ENCODE measurements at regions of chr3 and their contacts with region 1.

Region 1: GRCh38 chr3:156151824-156152428 is 31.5 kb downstream of the KCNAB1 start:
- DNase-seq: peak; percentile 63 to 83
- H3K4me3 ChIP-seq: no peak overlapping the region
- H3K27ac ChIP-seq: no peak overlapping the region
- H3K4me1 ChIP-seq: no peaks in the 10 kb centered on the region
- H3K27me3 ChIP-seq: no peaks in the 10 kb centered on the region
- CTCF ChIP-seq: peak; percentile 90 to 93 (median 91)
- EP300 ChIP-seq: no peak
- POLR2A ChIP-seq: no peak
- RAD21 ChIP-seq: peak; percentile 95 to 97

Region 2: DNA sequence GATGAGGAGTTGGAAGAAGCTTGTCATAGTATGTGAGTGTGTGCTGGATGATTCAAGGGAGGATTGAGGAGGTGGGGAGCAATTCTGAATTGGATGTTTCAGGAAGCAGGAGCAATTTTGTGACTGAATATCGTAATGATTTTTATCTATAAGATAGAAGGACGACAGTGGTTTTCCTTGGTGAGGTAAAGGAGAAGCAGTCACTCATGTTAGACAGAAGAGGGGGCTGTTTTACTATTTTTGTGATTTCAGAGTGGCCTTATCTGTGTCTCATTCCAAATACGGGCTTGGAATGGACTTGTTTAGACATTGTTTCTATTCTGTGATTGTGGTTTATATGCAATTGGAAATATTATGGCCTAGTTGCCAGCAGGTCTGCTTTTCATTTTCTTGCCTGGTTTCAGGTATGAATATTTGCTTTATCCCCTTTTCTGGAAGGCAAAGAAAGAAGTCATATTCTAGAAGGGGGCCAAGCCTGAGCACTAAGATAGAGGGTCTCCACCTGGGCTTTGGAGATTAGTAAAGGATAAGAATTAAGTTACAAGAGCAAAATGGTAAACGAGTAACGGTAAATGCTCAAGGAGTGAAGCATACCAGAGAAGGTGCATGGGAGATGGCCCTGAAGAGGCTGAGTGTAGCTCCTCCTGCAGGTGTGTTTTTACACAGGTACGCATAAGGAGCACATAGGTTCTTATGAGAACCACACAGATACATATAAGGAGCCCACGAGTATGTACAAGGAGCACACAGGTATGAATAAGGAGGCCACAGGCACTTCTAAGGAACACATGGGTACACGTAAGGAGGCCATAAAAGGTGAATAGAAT is 156.2 kb before region 1 on chr3:
- CTCF ChIA-PET with region 1: interaction called, 11 read pairs
- POLR2A ChIA-PET with region 1: no interaction called
- DNase-seq: no peak
- H3K4me3 ChIP-seq: no peak overlapping the region
- H3K27ac ChIP-seq: no peak overlapping the region
- H3K4me1 ChIP-seq: no peaks in the 10 kb centered on the region
- H3K27me3 ChIP-seq: no peaks in the 10 kb centered on the region
- CTCF ChIP-seq: peak; percentile 25 to 65 (median 59)
- EP300 ChIP-seq: no peak
- POLR2A ChIP-seq: no peak
- RAD21 ChIP-seq: peak; percentile 80 to 81

Region 3: DNA sequence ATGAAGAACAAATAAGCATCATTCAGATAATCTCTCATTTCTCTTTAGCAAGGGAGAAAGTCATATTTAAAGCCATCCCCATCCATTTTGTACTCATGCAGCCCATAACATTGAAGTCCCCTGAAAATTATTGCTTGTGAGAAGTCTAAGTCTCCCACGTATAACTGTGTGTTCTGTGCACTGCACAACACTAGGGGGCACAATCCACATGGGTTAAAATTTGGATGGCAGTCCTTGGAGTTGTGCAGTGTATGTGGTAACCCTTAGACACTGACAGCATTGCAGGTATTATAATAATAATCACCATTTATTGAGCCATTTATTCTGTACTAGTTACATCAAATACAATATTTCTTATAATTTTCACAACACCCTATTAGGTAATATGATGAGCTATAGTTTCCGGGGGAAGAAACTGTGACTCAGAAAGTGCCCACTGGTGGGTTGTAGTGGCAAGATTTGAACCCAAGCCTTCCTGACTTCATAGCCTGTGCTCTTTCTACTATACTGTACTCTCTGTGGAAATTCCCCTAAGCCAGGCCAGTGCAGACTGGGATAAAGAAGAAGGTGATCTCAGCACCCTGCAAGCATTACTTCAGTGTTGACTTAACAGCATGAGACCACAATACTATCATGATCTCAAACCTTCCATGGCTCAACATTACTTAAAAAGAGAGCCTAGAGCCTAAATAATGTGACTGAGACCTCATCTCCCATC is 15.8 kb before region 1 on chr3:
- CTCF ChIA-PET with region 1: interaction called, 53 read pairs
- POLR2A ChIA-PET with region 1: no interaction called
- DNase-seq: no peak
- H3K4me3 ChIP-seq: no peak overlapping the region
- H3K27ac ChIP-seq: no peak overlapping the region
- H3K4me1 ChIP-seq: no peaks in the 10 kb centered on the region
- H3K27me3 ChIP-seq: no peaks in the 10 kb centered on the region
- CTCF ChIP-seq: peak; percentile 3 to 64 (median 52)
- EP300 ChIP-seq: no peak
- POLR2A ChIP-seq: no peak
- RAD21 ChIP-seq: peak; percentile 57 to 69

Region 4: DNA sequence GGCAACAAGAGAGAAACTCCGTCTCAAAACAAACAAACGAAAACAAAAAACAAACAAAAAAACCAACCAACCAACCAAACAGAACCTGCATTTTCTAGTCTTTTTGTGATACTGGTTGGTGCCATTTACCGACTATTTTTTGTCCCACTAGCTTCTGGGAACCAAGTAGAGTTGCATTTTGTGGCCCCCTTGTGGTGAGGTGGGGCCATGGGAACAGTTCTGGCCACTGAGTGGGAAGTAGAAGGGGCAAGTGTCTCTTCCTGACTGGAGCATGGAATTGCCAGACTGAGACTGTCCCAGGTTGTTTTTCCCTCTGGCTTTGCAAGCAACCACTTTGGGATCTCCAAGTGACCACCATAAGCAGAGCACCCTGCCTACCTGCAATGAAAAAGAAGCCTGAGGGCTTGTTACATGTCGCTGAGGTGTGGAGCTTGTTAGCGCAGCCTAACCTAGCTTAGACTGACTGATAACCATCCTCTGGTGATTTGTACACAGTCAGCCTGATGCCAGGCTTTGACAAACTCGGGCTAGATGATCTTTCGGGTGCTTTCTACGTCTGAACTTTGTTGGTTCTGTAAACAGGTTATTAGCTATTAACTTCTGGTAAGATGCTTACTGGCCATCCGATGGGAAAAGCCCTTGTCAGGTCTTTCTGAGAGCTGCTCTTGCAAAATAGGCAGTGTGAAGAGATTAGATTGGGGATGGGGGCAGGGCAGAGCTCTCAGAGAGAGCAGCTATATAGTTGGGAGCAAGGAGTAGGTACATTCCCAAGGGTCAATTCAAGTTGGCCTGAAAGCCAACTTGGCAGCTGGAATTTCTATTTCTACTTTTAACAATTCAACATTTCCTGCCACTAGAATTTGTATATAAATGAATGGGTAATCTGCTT is 230.8 kb after region 1 on chr3:
- CTCF ChIA-PET with region 1: interaction called, 138 read pairs
- POLR2A ChIA-PET with region 1: no interaction called
- DNase-seq: peak in 1 of 2 experiments; percentile 80
- H3K4me3 ChIP-seq: no peak overlapping the region
- H3K27ac ChIP-seq: no peak overlapping the region
- H3K4me1 ChIP-seq: no peaks in the 10 kb centered on the region
- H3K27me3 ChIP-seq: no peaks in the 10 kb centered on the region
- CTCF ChIP-seq: peak; percentile 80 to 86 (median 86)
- EP300 ChIP-seq: no peak
- POLR2A ChIP-seq: no peak
- RAD21 ChIP-seq: peak; percentile 83 to 90

Region 5: DNA sequence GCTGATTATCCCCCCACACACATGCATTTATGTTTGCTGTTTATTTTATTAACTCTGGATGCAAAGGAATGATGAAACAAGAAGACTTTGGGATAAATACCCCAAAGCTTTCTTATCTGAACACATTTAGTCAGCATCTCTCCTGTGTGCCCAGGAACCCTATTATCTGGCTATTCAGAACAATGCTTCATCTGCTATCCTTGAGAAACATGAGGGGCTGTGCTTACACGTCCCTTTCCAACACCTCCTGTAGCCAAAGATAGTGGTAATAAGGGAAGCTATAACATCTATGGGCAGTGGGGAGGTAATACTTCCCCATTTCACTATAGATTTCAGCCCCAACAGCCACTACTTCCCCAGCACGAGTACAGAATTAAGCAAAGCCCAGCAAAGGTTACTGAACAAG is 308.3 kb after region 1 on chr3:
- CTCF ChIA-PET with region 1: interaction called, 13 read pairs
- POLR2A ChIA-PET with region 1: no interaction called
- DNase-seq: no peak
- H3K4me3 ChIP-seq: no peak overlapping the region
- H3K27ac ChIP-seq: no peak overlapping the region
- H3K4me1 ChIP-seq: peaks cover 5 to 17% (median 13%) of the 10 kb centered on the region in 4 experiments; a peak in 5 of 7 replicates
- H3K27me3 ChIP-seq: no peaks in the 10 kb centered on the region
- CTCF ChIP-seq: no peak
- EP300 ChIP-seq: no peak
- POLR2A ChIP-seq: no peak
- RAD21 ChIP-seq: no peak

Region 6: GRCh38 chr3:156519758-156520162 is 367.8 kb after region 1 on chr3:
- CTCF ChIA-PET with region 1: interaction called, 18 read pairs
- POLR2A ChIA-PET with region 1: no interaction called
- DNase-seq: no peak
- H3K4me3 ChIP-seq: no peak overlapping the region
- H3K27ac ChIP-seq: no peak overlapping the region
- H3K4me1 ChIP-seq: peaks cover 0 to 2% (median 0%) of the 10 kb centered on the region in 4 experiments; a peak in 1 of 7 replicates
- H3K27me3 ChIP-seq: no peaks in the 10 kb centered on the region
- CTCF ChIP-seq: no peak
- EP300 ChIP-seq: no peak
- POLR2A ChIP-seq: no peak
- RAD21 ChIP-seq: no peak

Region 7: GRCh38 chr3:157136647-157137387 is 984.9 kb after region 1 on chr3:
- CTCF ChIA-PET with region 1: interaction called, 19 read pairs
- POLR2A ChIA-PET with region 1: no interaction called
- DNase-seq: no peak
- H3K4me3 ChIP-seq: no peak overlapping the region
- H3K27ac ChIP-seq: no peak overlapping the region
- H3K4me1 ChIP-seq: no peaks in the 10 kb centered on the region
- H3K27me3 ChIP-seq: no peaks in the 10 kb centered on the region
- CTCF ChIP-seq: no peak
- EP300 ChIP-seq: no peak
- POLR2A ChIP-seq: no peak
- RAD21 ChIP-seq: no peak